Naive thymus-derived CD4-positive, alpha-beta T cell (primary cell): ENCODE measurements at regions of chr21 and their contacts with region 1.

Region 1: GRCh38 chr21:40385892-40386599 is 460.9 kb downstream of the DSCAM start:
- DNase-seq: peak in 3 of 9 donors; percentile 4 to 56 (median 11)
- ATAC-seq: no peak
- H3K4me3 ChIP-seq: no peak overlapping the region
- H3K4me3 Mint-ChIP-seq: no peak overlapping the region
- H3K27ac ChIP-seq: no peak overlapping the region
- H3K27ac Mint-ChIP-seq: no peak overlapping the region
- H3K4me1 ChIP-seq: no peaks in the 10 kb centered on the region
- H3K4me1 Mint-ChIP-seq: peaks cover 0 to 3% (median 0%) of the 10 kb centered on the region in 7 donors
- H3K27me3 ChIP-seq: no peaks in the 10 kb centered on the region
- H3K27me3 Mint-ChIP-seq: peaks cover 0 to 32% (median 8%) of the 10 kb centered on the region in 5 donors

Region 2: DNA sequence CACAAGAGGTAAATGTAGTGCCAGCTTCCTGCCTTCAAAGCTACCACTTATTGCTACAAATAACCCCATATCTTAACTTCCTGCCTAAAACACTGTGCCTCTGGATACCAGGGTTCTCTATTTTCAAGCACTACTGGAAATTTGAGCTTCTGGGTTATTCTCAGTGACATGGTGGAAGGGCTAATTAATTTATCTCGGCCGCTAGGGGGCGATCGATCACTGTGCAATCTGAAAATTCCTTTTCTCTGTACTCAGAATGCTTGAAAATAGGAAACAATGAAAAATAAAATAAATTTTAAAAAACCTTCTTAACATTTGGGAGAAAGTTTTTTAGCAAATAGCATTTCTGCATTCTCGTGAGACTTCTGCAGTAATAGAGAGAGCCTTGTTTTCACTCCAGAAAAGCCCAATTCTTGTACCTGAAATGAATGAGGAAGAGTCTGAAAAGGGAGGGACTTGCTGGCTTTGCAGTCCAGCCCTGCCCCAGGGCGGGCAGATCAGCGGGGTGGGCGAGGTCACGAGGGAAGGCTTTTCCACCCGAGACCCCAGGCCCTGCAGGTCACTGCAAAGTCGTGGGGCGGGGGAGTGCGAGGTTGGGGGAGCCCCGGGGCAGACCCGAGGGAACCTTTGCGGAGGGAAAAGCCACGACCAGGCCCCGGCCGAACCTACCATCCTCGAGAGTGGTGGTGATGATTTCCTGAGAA is 242.1 kb before region 1 on chr21:
- CTCF ChIA-PET with region 1: no interaction called
- POLR2A ChIA-PET with region 1: no interaction called
- intact Hi-C with region 1: loop called in 1 of 2 experiments (anchors 5 kb)
- DNase-seq: peak in 5 of 9 donors; percentile 2 to 24 (median 10)
- ATAC-seq: no peak
- H3K4me3 ChIP-seq: no peak overlapping the region
- H3K4me3 Mint-ChIP-seq: no peak overlapping the region
- H3K27ac ChIP-seq: no peak overlapping the region
- H3K27ac Mint-ChIP-seq: no peak overlapping the region
- H3K4me1 ChIP-seq: no peaks in the 10 kb centered on the region
- H3K4me1 Mint-ChIP-seq: no peaks in the 10 kb centered on the region
- H3K27me3 ChIP-seq: no peaks in the 10 kb centered on the region
- H3K27me3 Mint-ChIP-seq: no peaks in the 10 kb centered on the region